ENCODE measurements at regions of chr19 and their contacts with region 1.

Region 1: DNA sequence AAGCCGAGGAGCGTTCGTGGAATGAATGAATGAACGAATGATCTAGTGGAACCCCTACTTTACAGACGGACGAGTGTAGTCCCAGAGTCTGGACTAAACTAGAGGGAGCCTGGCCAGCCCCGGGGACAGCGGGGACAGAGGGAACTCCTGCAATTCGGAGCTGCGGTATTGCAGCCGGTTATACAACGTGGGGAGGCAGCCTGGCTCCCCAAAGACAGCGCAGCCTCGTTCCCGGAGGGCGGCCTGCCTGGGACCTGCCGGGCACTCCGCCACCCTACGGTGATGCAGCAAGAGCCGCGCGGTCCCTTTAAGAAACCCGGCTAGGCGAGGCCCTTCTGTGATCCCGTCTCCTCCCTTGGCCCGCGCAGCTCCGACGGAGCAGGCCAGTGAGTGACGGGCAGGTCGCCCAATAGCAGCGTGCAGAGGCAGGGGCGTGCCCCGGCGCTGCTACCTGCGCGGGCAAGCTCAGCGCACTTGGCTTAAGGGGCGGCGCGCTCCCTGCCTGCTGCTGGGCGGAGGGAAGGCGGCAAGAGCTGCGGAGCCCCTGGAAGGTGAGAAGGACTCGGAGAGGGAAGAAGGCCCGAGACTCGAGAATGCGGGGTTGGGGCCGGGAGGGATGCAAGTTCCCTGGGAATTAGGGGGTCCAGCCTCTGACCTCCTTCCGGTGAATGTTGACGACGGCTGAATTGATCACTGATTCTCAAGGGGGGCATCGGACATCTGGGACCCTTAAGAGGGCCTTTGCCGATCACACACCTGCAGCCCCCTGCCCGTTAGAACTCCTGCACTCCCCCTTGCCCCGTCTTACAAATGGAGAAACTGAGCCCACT is at the start of gene ABCA7:
- DNase-seq: peak; percentile 100
- ATAC-seq: peak; percentile 95
- H3K4me3 Mint-ChIP-seq: peak within 1 kb of the TSS; percentile 93
- H3K27ac Mint-ChIP-seq: peak within 1 kb of the TSS; percentile 83
- H3K4me1 Mint-ChIP-seq: peaks cover 53% of the 10 kb centered on the region
- H3K27me3 Mint-ChIP-seq: no peaks in the 10 kb centered on the region
- total RNA-seq, gene ABCA7: 62.7 to 72.9 TPM

Region 2: GRCh38 chr19:900302-901111 is 139.4 kb before region 1 on chr19:
- CTCF ChIA-PET with region 1: no interaction called
- DNase-seq: peak; percentile 58
- ATAC-seq: peak; percentile 72
- H3K4me3 Mint-ChIP-seq: no peak overlapping the region
- H3K27ac Mint-ChIP-seq: no peak overlapping the region
- H3K4me1 Mint-ChIP-seq: peaks cover 3% of the 10 kb centered on the region
- H3K27me3 Mint-ChIP-seq: no peaks in the 10 kb centered on the region

Region 3: DNA sequence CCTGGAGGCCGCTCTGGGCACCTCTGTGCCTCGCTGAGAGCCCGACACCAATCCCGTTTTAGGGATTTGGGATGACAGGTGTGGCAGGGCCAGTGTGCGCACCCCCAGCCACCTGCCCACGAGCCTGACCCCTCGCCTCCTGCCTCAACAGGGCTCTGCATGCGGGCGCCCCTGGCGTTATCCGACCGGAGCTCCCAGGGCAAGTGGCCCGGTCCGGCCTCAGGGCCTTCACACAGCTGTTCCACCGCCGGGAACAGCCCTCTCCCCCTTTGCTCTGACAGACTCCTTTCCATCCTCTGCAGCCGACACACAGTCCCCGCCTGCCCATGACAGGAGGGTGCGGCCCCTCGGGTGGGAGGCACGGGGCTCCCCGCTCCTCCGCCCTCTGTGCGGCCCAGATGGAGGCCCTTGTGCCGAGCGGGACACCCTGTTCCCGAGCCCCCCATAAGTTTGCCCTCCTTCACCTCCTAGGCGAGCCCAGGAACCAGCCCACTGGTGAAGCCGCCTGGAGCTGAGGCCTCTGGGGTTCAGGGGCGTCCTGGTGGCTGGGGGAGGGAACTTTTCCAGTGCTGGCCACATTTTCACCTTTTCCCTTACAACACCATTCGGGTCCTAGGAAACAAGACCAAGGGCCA is 62.7 kb before region 1 on chr19:
- CTCF ChIA-PET with region 1: no interaction called
- DNase-seq: no peak
- ATAC-seq: no peak
- H3K4me3 Mint-ChIP-seq: no peak overlapping the region
- H3K27ac Mint-ChIP-seq: no peak overlapping the region
- H3K4me1 Mint-ChIP-seq: no peaks in the 10 kb centered on the region
- H3K27me3 Mint-ChIP-seq: no peaks in the 10 kb centered on the region

Region 4: DNA sequence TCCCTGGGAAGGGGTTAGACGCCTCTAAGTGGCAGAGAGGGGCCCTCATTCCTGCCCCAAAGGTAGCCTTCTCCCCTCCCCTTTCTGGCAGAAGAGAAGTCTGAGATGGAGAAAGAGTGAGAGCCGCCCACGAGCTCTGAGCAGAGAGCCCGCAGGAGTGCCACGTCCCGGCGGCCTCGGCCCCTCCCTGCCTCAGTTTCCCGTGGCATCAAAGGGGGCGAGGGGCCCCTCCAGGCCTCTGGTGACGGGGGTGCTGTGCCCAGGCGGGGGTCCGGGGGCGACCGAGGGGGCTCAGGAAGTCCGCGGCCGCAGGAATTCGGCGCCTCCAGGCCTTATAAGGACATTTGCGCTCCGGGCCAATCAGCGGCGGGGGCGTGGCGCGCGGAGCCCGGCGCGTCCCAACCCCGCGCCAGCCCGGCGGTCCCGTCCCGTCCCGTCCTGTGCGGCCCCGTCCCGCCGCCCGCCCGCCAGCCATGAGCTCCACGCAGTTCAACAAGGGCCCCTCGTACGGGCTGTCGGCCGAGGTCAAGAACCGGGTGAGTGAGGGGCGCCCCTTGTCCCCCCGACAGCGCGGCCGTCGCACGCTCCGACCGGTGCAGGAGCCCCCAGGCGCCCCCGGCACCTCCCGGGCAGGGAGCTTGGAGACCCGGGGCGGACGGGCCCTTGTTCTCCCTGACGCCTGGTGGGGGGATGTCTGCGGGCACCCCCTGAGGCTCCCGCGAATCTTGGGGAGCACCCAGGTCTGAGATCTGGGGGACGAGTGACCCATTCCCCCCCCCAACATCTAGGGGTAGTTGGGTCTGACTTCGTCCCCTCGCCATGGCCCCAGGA is 13.5 kb before region 1 on chr19 and contains the start of gene CNN2:
- CTCF ChIA-PET with region 1: interaction called, 76 read pairs
- DNase-seq: peak; percentile 79
- ATAC-seq: peak; percentile 69
- H3K4me3 Mint-ChIP-seq: peak within 1 kb of the TSS; percentile 91
- H3K27ac Mint-ChIP-seq: peak within 1 kb of the TSS; percentile 90
- H3K4me1 Mint-ChIP-seq: peaks cover 29% of the 10 kb centered on the region
- H3K27me3 Mint-ChIP-seq: no peaks in the 10 kb centered on the region
- total RNA-seq, gene CNN2: 295 to 296 TPM

Measured in activated CD8-positive, alpha-beta memory T cell treated with anti-CD3 and anti-CD28 coated beads, Interleukin-2, amount 10 ng/mL, durations not matched to agents 7 days and 5 days (primary cell).